ENCODE measurements at regions of chr4 and their contacts with region 1.

Region 1: DNA sequence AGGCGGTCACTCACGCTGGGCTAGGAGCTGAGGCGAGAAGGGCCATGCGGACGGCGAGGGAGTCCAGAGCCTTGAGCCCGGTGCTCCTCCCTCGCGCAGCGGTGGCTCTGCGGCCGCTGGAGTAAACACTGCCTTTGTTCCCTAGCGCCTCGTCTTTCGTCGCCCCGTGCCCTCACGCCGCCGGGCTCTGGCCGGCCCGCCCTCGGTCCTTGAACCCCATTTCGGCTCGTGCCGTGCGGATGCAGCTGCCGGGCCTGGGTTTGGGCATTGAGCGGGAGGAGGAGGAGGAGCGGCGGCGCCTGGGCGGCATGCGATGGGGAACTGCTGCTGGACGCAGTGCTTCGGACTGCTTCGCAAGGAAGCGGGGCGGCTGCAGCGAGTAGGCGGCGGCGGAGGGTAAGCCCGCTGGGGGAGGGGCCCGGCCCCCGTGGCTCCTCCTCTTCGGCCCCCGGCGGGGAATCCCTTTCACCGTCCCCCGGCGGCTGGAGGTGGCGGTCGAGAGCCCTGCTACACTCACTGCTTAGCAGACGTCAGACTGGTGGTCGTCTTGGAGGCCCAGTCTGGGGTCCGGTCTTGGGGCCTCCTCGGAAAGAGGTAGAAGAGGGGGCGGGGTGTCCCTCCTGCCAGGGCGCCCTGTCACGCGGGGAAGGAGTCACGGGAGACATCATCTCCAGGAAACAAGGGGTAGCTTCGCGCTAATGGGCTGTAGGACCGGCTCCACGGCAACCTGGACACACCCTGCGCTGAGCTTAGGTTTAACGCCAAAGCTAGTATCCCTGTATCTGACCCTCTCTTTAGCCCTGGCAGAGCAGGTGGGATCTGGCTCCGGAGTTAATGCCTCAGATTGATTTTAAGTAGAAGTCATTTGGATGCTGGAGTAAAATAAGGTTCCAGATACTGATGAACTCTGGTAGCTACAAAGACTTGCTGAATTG is at the start of gene AP1AR:
- DNase-seq: peak; percentile 94
- ATAC-seq: peak; percentile 85
- H3K4me3 ChIP-seq: peak within 1 kb of the TSS; percentile 89
- H3K27ac ChIP-seq: peak within 1 kb of the TSS; percentile 95
- H3K4me1 ChIP-seq: peaks cover 17% of the 10 kb centered on the region
- H3K27me3 ChIP-seq: no peaks in the 10 kb centered on the region
- CTCF ChIP-seq: peak; percentile 47
- total RNA-seq, gene AP1AR: 16.6 TPM

Region 2: DNA sequence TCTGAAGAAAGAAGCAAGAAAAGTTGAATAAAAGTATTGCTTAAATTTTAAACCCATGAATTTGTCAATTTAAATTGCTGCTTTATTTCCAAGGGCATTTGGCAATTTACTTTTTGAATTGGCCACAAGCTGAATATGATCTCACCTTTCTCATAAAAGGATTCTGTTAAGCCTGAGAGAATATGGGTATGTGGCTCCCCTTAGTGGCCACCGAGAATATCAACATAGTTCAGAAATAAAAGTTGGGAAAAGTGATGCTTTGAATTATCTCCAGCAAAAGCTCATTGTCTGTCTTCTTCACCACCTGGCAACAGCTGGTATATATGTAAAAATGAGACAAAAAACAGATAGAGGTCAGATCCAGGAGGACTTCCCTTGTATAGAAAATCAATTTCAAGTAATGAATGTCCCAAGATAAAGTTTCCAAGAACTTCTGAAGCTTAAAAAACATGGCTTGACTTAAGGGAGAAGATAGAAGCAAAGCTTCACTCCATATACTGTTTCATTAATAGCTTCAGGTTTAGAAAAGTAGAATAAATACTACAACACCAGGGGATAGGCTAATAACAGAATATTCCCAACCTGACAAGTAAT is 377.5 kb before region 1 on chr4:
- intact Hi-C with region 1: no loop called
- DNase-seq: no peak
- ATAC-seq: peak; percentile 65
- H3K4me3 ChIP-seq: no peak overlapping the region
- H3K27ac ChIP-seq: no peak overlapping the region
- H3K4me1 ChIP-seq: no peaks in the 10 kb centered on the region
- H3K27me3 ChIP-seq: no peaks in the 10 kb centered on the region
- CTCF ChIP-seq: peak; percentile 54

Region 3: DNA sequence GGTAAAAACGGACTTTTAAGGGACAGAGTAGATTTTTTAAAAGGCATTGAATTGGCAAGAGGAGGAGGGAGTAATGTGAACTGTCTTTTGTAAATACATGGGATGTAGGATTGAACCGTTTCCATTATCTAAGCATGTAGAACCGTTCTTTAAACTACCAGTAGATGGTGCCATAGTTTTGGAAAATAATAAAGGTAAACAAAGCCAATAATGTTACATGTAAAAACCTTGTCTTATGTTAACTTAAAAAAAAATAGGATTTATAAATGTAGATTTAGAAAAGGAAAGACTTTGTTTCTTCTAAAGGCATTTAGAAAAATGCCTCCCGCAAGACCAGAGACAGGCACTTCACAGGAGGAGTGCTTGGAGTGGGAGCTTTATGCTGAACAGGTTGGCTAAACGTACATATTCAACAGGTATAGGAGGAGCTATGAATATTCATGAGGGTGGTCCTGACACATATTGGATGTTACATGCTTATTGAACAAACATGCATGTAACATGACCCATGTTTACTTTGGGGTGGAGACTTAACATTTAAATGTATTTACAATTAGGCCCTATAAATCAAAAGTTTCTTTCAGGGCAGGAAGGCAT is 132.2 kb before region 1 on chr4:
- intact Hi-C with region 1: loop called (anchors 10 kb)
- DNase-seq: no peak
- ATAC-seq: peak; percentile 78
- H3K4me3 ChIP-seq: no peak overlapping the region
- H3K27ac ChIP-seq: no peak overlapping the region
- H3K4me1 ChIP-seq: no peaks in the 10 kb centered on the region
- H3K27me3 ChIP-seq: no peaks in the 10 kb centered on the region
- CTCF ChIP-seq: peak; percentile 76

Measured in upper lobe of right lung (tissue), 1 donor.